ENCODE measurements at regions of chr10 and their contacts with region 1.

Region 1: GRCh38 chr10:104406715-104407650 is 53.4 kb downstream of the CFAP58 start:
- DNase-seq: no peak
- CTCF ChIP-seq: peak; percentile 41

Region 2: GRCh38 chr10:104368381-104368780 is 38.6 kb before region 1 on chr10:
- CTCF ChIA-PET with region 1: no interaction called
- POLR2A ChIA-PET with region 1: no interaction called
- DNase-seq: no peak
- CTCF ChIP-seq: no peak

Region 3: GRCh38 chr10:104441329-104442000 is 34.5 kb after region 1 on chr10:
- CTCF ChIA-PET with region 1: no interaction called
- POLR2A ChIA-PET with region 1: no interaction called
- DNase-seq: no peak
- CTCF ChIP-seq: no peak

Region 4: GRCh38 chr10:104614245-104614831 is 207.4 kb after region 1 on chr10:
- CTCF ChIA-PET with region 1: interaction called, 10 read pairs
- POLR2A ChIA-PET with region 1: no interaction called
- DNase-seq: peak; percentile 44
- CTCF ChIP-seq: peak; percentile 35

Measured in GM10248 (cell line).